MCF 10A (cell line): ENCODE measurements at regions of chr20 and their contacts with region 1.

Region 1: DNA sequence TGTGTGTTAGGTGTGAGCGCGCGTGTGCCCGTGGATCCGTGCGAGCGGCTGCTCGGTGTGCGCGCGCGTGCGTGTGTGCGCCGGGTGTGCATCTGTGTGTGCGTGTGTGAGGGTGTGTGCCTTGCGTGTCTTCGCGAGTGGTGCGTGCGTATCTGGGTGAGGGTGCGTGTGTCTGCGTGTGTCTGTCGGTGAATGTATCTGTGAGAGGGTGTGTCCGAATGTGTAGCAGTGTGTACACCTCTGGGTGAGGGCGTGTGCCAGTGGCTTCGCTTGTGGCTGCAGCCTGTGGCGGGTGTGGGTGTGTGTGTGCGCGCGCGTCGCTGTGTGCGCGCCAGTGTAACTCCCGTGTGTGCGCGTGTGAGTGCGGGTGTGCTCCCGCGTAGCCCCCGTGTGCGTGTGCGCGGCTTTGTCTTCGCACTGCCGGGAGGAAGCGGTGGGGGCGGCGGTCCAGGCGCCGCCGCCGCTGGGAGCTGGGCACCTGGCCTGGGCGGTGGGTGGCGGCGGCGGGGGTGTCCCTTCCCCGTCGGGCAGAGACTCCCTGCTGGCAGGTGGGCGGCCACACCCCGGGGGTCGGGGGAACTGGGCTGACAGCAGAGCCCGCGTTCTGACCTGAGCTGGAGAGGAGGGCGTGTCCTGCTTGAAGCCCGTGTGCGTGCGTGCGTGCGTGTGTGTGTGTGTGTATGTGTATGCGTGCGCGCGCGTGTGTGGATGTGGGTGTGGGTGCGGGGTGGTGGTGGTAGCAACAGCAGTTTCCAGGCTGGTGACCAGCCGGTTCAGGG is 61.3 kb upstream of the EPB41L1 start:
- DNase-seq: peak; percentile 15
- H3K4me3 Mint-ChIP-seq: peak overlapping the region; percentile 90
- H3K27ac Mint-ChIP-seq: no peak overlapping the region
- H3K4me1 Mint-ChIP-seq: peaks cover 33% of the 10 kb centered on the region
- H3K27me3 Mint-ChIP-seq: no peaks in the 10 kb centered on the region
- CTCF ChIP-seq: no peak

Region 2: DNA sequence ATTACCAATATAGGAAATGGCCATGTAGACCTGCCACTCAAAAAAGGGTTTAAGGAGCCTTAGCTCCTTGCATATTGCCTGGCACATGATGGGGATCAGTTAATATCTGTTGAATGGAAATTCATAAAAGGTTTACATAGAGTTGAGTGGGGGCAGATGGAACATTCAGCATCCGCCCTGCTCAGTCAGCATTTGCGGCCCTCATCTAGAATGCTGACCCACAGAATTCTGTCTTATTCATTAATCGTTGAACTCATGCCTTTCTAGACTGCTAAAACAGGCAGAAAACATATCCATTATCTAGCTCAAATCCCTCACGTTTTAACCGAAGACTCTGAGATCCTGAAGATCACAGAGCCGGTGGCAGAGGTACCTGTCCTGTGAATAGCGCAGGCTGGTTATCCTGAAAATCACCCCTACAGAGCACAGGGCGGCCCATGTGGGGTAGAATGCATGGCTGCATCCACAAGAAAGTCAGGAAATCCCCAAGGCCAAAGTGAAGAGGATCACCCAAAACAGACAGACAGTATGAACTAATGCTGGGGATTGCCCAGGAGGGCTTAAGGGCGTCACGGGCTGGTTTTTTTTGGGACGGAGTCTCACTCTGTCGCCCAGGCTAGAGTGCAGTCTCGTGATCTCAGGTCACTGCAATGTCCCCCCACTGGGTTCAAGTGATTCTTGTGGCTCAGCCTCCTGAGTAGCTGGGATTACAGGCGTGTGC is 64.9 kb before region 1 on chr20:
- CTCF ChIA-PET with region 1: no interaction called
- POLR2A ChIA-PET with region 1: no interaction called
- intact Hi-C with region 1: no loop called
- DNase-seq: no peak
- H3K4me3 Mint-ChIP-seq: no peak overlapping the region
- H3K27ac Mint-ChIP-seq: no peak overlapping the region
- H3K4me1 Mint-ChIP-seq: no peaks in the 10 kb centered on the region
- H3K27me3 Mint-ChIP-seq: peaks cover 12% of the 10 kb centered on the region
- CTCF ChIP-seq: no peak

Region 3: GRCh38 chr20:36050436-36051317 is 42.5 kb before region 1 on chr20:
- CTCF ChIA-PET with region 1: interaction called, 5 read pairs
- POLR2A ChIA-PET with region 1: interaction called, 77 read pairs
- intact Hi-C with region 1: loop called (anchors 5 kb)
- DNase-seq: peak; percentile 82
- H3K4me3 Mint-ChIP-seq: peak overlapping the region; percentile 84
- H3K27ac Mint-ChIP-seq: peak overlapping the region; percentile 93
- H3K4me1 Mint-ChIP-seq: peaks cover 24% of the 10 kb centered on the region
- H3K27me3 Mint-ChIP-seq: no peaks in the 10 kb centered on the region
- CTCF ChIP-seq: no peak

Region 4: DNA sequence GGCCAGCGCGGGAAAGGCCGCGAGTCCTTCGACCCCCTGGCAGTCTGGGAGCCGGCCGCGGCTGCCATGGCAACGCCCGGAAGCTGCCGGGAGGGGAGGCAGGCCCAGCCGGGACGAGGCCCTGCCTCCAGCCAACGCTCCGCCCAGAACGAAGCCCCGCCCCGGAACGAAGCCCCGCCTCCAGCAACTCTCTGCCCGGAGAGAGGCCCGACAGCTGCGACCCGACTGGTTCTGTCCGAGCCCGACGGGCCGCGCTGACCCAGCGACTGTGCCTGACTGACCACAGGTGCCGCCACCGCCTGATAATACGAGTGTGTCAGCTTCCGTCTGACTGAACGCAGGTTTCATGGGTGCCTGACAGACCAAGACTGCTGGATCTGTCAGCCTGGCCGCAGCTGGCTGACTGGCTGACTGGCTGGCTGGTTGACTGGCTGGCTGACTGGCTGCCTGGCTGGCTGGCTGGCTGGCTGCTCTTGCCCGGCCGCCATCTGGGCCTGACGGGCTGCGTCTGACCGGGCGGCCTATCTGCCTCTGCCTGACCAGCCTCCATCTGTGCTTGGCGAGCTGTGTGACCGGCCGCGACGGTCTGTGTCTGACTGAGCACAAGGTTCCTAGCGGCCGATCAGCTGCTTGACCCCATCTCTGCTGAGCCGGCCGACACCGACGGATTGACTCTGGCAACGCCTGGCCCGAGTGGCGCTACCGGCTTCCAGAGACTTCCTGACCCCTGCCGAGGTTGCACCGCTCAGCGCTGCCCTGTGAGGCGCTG is 28.4 kb before region 1 on chr20:
- CTCF ChIA-PET with region 1: no interaction called
- POLR2A ChIA-PET with region 1: interaction called, 15 read pairs
- intact Hi-C with region 1: no loop called
- DNase-seq: peak; percentile 80
- H3K4me3 Mint-ChIP-seq: peak overlapping the region; percentile 72
- H3K27ac Mint-ChIP-seq: peak overlapping the region; percentile 27
- H3K4me1 Mint-ChIP-seq: peaks cover 6% of the 10 kb centered on the region
- H3K27me3 Mint-ChIP-seq: no peaks in the 10 kb centered on the region
- CTCF ChIP-seq: no peak

Region 5: GRCh38 chr20:36128463-36129159 is 35.4 kb after region 1 on chr20:
- CTCF ChIA-PET with region 1: no interaction called
- POLR2A ChIA-PET with region 1: interaction called, 11 read pairs
- intact Hi-C with region 1: no loop called
- DNase-seq: peak; percentile 51
- H3K4me3 Mint-ChIP-seq: no peak overlapping the region
- H3K27ac Mint-ChIP-seq: no peak overlapping the region
- H3K4me1 Mint-ChIP-seq: peaks cover 4% of the 10 kb centered on the region
- H3K27me3 Mint-ChIP-seq: no peaks in the 10 kb centered on the region
- CTCF ChIP-seq: no peak